Cardiac septum (tissue), 1 donor: ENCODE measurements at regions of chr6 and their contacts with region 1.

Region 1: DNA sequence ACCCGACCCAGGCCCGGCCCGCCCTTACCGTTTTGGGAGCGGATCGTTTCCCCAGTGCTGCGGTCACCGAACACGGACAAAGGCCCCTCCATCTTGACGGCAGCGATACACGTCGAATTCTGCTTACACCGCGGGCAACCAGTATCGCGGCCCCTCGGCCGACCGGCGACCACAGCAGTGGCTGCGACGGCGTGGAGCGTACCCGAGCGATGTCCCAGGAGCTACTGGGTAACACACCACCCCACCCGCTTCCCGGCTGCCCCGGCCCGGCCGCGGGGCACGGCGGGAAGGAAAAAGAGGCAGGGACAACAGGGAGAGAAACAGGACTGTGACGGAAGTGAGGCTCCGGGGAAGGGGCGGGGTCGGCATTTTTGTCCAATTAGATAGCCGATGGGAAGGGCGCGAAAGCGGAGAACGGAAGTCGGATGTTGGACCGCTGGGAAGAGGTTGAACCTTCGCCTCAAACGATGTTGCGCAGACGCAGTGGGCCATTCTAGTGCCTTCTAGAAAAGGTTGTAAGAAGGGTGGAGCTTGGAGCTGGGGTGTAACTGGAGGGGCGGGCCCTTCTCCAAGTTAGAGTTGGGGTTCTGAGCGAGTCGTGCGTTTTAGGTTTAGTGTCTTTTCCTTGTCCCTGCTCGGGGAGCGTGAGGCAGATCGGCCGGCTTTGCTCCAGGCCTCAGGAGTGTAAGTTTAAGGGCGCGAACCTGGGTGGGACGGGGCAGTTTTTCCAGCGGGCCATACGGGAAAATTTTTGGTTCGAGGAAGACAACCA is at the start of gene TCP1:
- DNase-seq: peak; percentile 99
- total RNA-seq, gene TCP1: 130 TPM

Region 2: DNA sequence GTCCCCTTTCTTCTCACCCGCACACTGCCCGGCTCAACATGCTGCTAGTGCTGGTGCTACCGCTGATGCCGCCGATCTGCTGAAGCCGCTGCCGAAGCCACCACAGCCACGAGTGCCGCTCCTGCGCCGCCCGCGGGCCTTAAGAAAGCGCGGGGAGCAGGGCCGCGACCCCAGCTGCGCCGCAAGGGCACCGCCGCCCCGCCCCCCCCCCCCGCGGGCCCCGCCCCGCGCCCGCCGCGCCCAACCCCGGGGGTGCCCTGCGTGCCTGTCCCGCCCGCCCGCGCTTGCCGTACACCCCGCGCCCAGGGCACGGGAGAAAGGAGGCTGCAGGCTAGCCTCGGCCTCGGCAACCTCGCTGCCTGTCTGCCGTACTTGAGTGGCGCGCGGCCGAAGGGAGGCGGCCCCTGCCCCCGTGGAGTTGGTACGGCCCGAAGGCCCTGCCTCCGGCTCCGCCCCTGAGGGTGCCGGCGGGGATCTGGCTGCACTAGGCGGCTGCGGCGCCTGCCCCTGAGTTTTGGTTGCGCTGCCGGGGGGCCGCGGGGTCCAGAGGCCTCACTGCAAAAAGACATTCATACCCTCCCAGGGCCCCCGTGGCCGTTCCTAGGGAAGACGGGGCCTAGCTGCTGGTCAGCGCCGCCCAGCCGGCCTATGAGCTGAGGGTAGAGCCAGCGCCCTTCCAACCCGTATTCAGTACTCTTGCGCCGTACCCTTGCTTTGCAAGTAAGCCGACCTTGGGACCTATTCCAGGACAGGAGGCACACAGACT is 96.3 kb before region 1 on chr6 and contains the start of gene SOD2:
- intact Hi-C with region 1: loop called (anchors 1 kb)
- DNase-seq: peak; percentile 94
- total RNA-seq, gene SOD2: 666 TPM

Region 3: DNA sequence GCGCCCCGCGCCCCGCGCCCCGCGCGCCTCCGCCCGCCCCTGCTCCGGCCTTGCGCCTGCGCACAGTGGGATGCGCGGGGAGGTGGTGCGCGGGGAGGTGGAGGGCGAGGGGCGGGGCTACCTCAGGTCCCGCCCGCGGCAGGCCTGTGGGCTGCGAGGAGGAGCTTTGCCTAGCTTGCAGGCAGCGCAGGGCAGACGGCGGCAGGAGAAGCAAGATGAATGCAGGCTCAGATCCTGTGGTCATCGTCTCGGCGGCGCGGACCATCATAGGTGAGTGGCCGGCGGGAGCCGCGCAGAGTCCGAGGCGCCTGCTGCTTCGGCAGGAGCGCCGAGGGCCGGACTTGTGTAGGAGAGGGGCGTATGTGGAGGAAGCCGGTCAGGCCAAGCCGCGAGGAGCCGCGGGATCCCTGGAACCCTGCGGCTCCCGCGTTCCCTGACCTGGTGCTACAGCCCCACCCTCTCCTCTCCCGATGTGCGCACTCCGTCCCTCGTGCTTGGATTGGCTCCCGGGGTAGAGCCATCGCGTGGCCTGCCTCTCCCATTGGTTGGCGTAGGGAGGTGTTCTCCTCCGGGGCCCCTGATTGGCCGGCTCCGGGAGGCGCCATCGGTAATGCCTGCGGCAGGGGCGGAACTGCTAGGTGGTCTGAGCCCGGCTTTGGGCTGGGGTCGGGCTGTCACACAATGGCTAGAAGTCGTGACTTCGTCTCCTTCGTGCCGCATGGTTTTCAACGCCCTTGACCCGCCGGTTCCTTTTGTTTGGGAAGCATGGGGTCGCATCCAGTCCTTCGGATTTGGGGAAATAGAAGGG is 27.5 kb before region 1 on chr6 and contains the start of gene ACAT2:
- intact Hi-C with region 1: loop called (anchors 2 kb)
- DNase-seq: peak; percentile 98
- total RNA-seq, gene ACAT2: 8.7 TPM

Region 4: GRCh38 chr6:161257793-161258457 is 1468.4 kb after region 1 on chr6:
- intact Hi-C with region 1: no loop called
- DNase-seq: no peak